ENCODE measurements at regions of chr19 and their contacts with region 1.

Region 1: GRCh38 chr19:52690369-52691214 is 44.3 kb downstream of the ZNF611 start:
- DNase-seq: peak; percentile 90
- H3K4me3 Mint-ChIP-seq: peak overlapping the region; percentile 94
- H3K27ac Mint-ChIP-seq: peak overlapping the region; percentile 97
- H3K4me1 Mint-ChIP-seq: peaks cover 33% of the 10 kb centered on the region
- H3K27me3 Mint-ChIP-seq: no peaks in the 10 kb centered on the region

Region 2: DNA sequence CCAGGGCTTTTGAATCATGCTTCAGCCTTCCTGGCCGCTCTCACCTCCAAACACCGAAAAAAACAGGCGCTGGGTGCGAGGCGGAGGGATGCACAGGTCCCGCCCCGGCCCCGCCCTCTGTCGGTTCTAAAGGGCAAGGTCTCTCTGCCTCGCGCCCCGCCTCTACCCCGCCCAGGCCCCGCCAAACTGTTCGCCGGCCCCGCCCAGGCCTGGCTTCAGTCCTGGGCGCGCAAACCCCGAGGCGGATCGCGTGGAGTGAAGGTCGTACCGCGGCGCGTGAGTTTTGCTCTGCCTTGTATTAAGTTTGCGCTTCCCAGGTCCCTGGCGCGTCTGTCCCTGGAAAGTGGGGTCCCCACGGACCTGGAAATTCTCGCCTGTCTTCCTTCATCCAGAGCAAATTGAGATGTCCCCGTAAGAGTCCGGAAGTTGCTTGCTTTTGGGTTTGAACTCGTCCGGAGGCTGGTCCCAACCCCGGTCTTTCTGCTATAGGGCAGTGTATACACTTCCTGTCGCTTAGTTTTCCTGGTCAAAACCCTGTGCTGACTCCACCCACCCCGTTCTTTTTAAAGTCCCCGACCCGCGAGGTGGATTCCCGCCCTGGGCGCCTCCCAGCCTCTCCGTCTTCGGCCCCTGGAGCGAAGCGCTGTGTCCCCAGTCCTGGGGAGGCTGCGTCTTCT is 154.7 kb before region 1 on chr19:
- intact Hi-C with region 1: loop called (anchors 5 kb)
- DNase-seq: peak; percentile 80
- H3K4me3 Mint-ChIP-seq: peak overlapping the region; percentile 84
- H3K27ac Mint-ChIP-seq: peak overlapping the region; percentile 88
- H3K4me1 Mint-ChIP-seq: peaks cover 11% of the 10 kb centered on the region
- H3K27me3 Mint-ChIP-seq: no peaks in the 10 kb centered on the region

Region 3: GRCh38 chr19:52622261-52622660 is 68.3 kb before region 1 on chr19:
- intact Hi-C with region 1: no loop called
- DNase-seq: no peak
- H3K4me3 Mint-ChIP-seq: no peak overlapping the region
- H3K27ac Mint-ChIP-seq: no peak overlapping the region
- H3K4me1 Mint-ChIP-seq: no peaks in the 10 kb centered on the region
- H3K27me3 Mint-ChIP-seq: no peaks in the 10 kb centered on the region

Region 4: DNA sequence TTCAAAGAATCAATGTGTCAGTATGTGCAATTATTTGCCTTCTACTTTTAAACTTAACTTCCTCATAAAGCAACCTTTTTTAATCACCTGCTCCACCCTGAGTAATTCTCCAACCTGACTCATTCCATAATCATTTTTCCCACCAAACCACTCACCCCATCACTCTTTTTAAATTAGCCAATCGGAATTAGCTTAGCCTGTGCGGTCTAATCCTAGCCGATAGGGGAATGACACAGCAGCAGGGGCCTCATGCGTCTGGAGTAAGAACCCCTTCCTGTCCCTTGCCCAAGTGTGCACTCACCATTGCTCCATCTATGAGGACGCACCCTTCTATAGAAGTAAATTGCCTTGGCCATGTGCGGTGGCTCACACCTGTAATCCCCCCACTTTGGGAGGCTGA is 25.1 kb before region 1 on chr19:
- intact Hi-C with region 1: no loop called
- DNase-seq: no peak
- H3K4me3 Mint-ChIP-seq: no peak overlapping the region
- H3K27ac Mint-ChIP-seq: no peak overlapping the region
- H3K4me1 Mint-ChIP-seq: no peaks in the 10 kb centered on the region
- H3K27me3 Mint-ChIP-seq: no peaks in the 10 kb centered on the region

Region 5: DNA sequence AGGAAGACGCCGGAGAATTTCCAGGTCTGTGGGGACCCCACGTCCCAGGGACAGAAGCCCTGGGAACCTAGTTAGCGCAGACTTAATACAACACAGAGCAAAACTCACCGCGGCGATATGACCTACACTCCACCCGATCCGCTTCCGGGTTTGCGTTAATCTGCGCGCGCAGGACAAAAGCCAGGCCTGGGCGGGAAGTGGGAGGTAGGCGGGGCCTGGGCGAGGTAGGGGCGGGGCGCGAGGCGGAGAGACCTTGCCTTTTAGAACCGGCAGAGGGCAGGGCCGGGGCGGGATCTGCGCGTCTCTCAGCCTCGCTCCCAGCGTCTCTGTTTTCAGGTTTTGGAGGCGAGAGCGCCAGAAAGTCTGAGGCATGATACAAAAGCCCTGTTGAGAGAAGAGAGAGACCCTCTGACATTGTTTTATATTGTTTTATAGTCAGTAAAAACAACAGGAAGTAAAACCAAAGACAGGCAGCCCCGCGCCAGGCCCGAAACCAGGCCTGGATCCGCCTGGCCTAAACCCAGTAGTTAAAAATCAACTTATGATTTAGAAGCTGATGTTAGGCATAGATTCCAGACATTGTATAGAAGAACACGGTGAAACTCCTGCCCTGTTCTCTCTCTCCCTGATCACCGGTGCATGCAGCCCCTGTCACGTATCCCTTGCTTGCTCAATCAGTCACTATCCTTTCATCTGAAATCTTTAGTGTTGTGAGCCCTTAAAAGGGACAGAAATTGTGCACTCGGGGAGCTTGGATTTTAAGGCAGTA is 44.5 kb after region 1 on chr19 and contains the start of gene ZNF611:
- intact Hi-C with region 1: loop called (anchors 1 kb)
- DNase-seq: peak; percentile 97
- H3K4me3 Mint-ChIP-seq: peak within 1 kb of the TSS; percentile 91
- H3K27ac Mint-ChIP-seq: peak within 1 kb of the TSS; percentile 92
- H3K4me1 Mint-ChIP-seq: peaks cover 27% of the 10 kb centered on the region
- H3K27me3 Mint-ChIP-seq: no peaks in the 10 kb centered on the region
- total RNA-seq, gene ZNF611: 17.0 and 21.0 TPM in 2 replicates

Region 6: DNA sequence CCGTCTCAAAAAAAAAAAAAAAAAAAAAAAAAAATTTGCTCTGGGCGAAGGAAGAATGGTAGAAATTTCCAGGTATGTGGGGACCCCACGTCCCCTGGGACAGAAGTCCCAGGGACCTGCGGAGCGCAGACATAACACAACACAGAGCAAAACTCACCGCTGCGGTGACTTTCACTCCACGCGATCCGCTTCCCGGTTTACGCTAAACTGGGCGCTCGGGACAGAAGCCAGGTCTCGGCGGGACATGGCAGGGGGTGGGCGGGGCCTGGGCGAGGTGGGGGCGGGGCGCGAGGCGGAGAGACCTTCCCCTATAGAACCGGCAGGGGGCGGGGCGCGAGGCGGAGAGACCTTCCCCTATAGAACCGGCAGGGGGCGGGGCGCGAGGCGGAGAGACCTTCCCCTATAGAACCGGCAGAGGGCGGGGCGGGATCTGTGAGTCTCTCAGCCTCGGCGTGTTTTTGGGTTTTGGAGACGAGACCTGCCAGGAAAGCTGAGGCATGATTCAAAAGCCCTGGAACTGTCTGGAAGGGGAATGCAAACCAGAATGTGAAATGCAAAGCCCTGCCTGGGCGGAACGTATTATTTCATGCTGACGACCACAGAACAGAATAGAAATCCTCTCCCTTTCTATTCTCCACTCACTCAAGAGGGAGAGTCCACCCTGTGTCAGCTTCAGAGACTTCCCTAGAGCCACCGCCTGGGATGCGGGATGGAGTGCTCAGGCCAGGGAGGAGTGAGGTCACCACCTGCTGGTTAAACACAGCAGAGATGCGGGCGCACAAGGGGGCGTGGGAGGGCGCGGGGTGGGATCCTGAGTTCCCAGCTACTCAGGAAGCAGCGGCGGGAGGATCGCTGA is 303.0 kb after region 1 on chr19:
- intact Hi-C with region 1: loop called (anchors 1 kb)
- DNase-seq: peak; percentile 79
- H3K4me3 Mint-ChIP-seq: peak overlapping the region; percentile 82
- H3K27ac Mint-ChIP-seq: no peak overlapping the region
- H3K4me1 Mint-ChIP-seq: peaks cover 6% of the 10 kb centered on the region
- H3K27me3 Mint-ChIP-seq: peaks cover 4% of the 10 kb centered on the region

Region 7: DNA sequence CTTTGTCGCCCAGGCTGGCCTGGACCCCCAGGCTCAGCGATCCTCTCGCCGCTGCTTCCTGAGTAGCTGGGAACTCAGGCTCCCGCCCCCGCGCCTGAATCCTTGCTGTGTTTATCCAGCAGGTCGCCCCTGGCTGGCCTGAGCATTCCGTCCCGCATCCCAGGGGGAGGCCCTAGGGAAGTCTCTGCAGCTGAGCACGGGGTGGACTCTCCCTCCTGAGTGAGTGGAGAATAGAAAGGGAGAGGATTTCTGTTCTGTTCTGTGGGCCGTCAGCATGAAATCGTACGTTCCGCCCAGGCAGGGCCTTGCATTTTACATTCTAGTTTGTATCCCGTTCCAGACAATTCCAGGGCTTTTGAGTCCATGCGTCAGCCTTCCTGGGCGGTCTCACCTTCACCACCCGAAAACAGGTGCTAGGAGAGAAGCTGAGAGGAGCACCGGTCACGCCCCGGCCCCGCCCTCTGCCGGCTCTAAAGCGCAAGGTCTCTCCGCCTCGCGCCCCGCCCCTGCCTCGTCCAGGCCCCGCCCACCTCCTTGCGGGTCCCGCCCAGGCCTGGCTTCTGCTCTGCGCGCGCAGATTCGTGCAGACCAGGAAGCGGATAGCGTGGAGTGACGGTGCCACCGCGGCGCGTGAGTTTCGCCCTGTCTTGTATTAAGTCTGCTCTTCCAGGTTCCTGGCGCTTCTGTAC is 741.0 kb after region 1 on chr19 and contains the start of gene ZNF761:
- intact Hi-C with region 1: loop called (anchors 5 kb)
- DNase-seq: peak; percentile 96
- H3K4me3 Mint-ChIP-seq: peak within 1 kb of the TSS; percentile 88
- H3K27ac Mint-ChIP-seq: peak within 1 kb of the TSS; percentile 94
- H3K4me1 Mint-ChIP-seq: peaks cover 25% of the 10 kb centered on the region
- H3K27me3 Mint-ChIP-seq: no peaks in the 10 kb centered on the region
- total RNA-seq, gene ZNF761: 9.9 and 12.3 TPM in 2 replicates